Motor neuron (in vitro differentiated cells): ENCODE measurements at regions of chr2 and their contacts with region 1.

Region 1: GRCh38 chr2:176781570-176782217 is 430.9 kb upstream of the HNRNPA3 start:
- ATAC-seq: no peak
- H3K4me3 ChIP-seq: no peak overlapping the region
- H3K27ac ChIP-seq: no peak overlapping the region
- H3K4me1 ChIP-seq: no peaks in the 10 kb centered on the region

Region 2: DNA sequence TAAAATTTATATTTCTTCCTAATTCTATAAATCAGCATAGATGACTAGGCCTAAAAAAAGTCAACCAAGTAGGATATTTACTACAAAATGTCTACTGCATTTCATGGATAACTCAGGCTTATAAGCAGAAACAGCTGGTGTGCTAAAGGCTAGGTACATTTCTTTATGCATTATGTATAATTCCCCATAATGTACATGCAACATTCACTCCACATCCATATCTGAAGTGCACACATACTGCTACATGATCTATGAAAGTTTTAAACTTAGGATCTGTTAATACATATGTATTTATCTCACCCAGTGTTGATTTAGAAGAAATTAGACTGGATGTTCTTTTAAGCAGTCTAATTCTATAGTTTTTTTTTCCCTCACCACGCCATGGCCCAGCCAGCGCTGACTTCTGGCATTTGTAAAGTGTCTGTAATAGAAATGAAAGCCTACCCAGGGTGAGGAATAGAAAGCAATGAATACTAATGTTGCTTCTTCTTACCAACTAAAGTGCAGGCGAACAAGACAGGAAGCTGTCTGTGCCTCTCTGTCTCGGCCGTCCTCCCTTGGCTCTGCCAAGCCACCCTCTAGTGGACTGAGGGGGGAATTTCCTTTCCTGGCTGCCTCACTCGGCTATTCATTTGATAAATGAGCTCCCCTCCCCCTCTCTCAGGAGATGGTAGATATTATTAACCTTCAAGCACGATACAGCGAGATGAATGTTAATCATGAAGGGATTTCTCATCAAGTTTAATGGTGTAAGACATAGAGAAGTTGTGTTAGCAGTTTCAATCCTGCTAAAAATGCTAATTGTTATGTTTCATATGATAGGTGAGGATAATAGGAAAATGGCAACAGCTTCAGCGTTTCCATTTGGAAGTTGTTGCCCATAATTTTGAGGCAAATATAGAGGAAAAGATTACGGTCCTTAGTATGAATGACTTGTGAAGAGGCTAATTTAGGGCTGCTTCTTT is 127.9 kb before region 1 on chr2:
- in situ Hi-C with region 1: loop called in 1 of 9 experiments (anchors 25 kb)
- ATAC-seq: peak; percentile 88 to 97 (median 93)
- H3K4me3 ChIP-seq: no peak overlapping the region
- H3K27ac ChIP-seq: no peak overlapping the region
- H3K4me1 ChIP-seq: peaks cover 4 to 17% of the 10 kb centered on the region in 2 donors

Region 3: DNA sequence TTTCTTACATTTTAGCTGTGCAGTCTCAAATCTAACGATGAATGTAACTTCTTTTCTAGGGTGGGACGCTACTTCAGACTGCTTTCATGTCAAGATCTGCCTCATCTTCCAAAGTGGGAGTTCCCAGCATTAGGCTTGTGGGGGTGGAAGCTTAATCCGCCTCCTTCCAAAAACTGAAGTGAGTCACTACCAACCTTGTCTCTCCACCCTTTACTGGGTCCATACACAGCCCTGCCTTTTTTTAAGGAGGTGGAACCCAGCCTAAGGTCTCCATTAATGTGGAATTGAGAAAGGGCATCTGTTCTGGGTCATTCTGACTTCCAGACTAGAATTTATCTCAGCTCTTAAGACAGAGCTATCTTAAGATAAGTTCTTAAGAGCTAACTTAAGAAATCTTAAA is 524.9 kb after region 1 on chr2:
- in situ Hi-C with region 1: no loop called
- ATAC-seq: peak in 3 of 8 experiments; percentile 41 to 99 (median 99)
- H3K4me3 ChIP-seq: no peak overlapping the region
- H3K27ac ChIP-seq: no peak overlapping the region
- H3K4me1 ChIP-seq: peaks cover 0 to 3% of the 10 kb centered on the region in 2 donors